ENCODE measurements at regions of chr7 and their contacts with region 1.

Region 1: GRCh38 chr7:12623897-12624498 is 53.5 kb downstream of the SCIN start:
- DNase-seq: peak in 1 of 2 experiments; percentile 54
- H3K4me3 ChIP-seq: no peak overlapping the region
- H3K4me1 ChIP-seq: peaks cover 6% of the 10 kb centered on the region; the same call in 1 of the 2 replicates
- H3K27me3 ChIP-seq: no peaks in the 10 kb centered on the region

Region 2: GRCh38 chr7:11969643-11970042 is 654.4 kb before region 1 on chr7:
- in situ Hi-C with region 1: no loop called
- DNase-seq: peak in 1 of 2 experiments; percentile 26
- H3K4me3 ChIP-seq: no peak overlapping the region
- H3K4me1 ChIP-seq: peaks cover 3% of the 10 kb centered on the region; the same call in 1 of the 2 replicates
- H3K27me3 ChIP-seq: no peaks in the 10 kb centered on the region

Region 3: GRCh38 chr7:12518920-12519681 is 104.9 kb before region 1 on chr7:
- in situ Hi-C with region 1: loop called (anchors 10 kb)
- DNase-seq: peak; percentile 41 to 59
- H3K4me3 ChIP-seq: no peak overlapping the region
- H3K4me1 ChIP-seq: no peaks in the 10 kb centered on the region
- H3K27me3 ChIP-seq: peaks cover 11% of the 10 kb centered on the region; the same call in 1 of the 2 replicates